ENCODE measurements at regions of chr1 and their contacts with region 1.

Region 1: DNA sequence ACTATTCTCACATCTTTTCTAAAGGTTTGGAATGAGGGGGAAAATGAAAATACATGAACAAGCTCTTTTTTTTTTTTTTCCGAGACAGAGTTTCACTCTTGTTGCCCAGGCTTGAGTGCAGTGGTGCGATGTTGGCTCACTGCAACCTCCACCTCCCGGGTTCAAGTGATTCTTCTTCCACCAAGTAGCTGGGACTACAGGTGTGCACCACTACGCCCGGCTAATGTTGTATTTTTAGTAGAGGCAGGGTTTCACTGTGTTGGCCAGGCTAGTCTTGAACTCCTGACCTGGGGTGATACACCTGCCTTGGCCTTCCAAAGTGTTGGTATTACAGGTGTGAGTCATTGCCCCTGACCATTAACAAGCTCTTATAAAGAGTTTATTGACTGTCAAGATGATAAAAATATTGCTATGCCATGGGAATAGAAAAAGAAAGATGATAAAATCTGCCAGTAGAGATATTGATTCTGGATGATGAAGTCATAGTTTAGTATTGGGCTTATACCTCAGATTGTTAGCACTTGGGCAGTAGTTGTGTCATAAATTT is 36.6 kb downstream of the INKA2 start:
- DNase-seq: no peak
- H3K4me3 ChIP-seq: no peak overlapping the region
- H3K27ac ChIP-seq: no peak overlapping the region
- H3K4me1 ChIP-seq: no peaks in the 10 kb centered on the region
- H3K27me3 ChIP-seq: no peaks in the 10 kb centered on the region
- CTCF ChIP-seq: no peak
- POLR2A ChIP-seq: no peak

Region 2: GRCh38 chr1:111644506-111644905 is 58.1 kb before region 1 on chr1:
- intact Hi-C with region 1: loop called (anchors 2 kb)
- DNase-seq: no peak
- H3K4me3 ChIP-seq: no peak overlapping the region
- H3K27ac ChIP-seq: no peak overlapping the region
- H3K4me1 ChIP-seq: peaks cover 0 to 3% of the 10 kb centered on the region in 2 donors
- H3K27me3 ChIP-seq: no peaks in the 10 kb centered on the region
- CTCF ChIP-seq: no peak
- POLR2A ChIP-seq: no peak

Region 3: GRCh38 chr1:111778541-111779051 is 76.0 kb after region 1 on chr1:
- intact Hi-C with region 1: no loop called
- DNase-seq: no peak
- H3K4me3 ChIP-seq: no peak overlapping the region
- H3K27ac ChIP-seq: no peak overlapping the region
- H3K4me1 ChIP-seq: no peaks in the 10 kb centered on the region
- H3K27me3 ChIP-seq: no peaks in the 10 kb centered on the region
- CTCF ChIP-seq: no peak
- POLR2A ChIP-seq: no peak

Region 4: DNA sequence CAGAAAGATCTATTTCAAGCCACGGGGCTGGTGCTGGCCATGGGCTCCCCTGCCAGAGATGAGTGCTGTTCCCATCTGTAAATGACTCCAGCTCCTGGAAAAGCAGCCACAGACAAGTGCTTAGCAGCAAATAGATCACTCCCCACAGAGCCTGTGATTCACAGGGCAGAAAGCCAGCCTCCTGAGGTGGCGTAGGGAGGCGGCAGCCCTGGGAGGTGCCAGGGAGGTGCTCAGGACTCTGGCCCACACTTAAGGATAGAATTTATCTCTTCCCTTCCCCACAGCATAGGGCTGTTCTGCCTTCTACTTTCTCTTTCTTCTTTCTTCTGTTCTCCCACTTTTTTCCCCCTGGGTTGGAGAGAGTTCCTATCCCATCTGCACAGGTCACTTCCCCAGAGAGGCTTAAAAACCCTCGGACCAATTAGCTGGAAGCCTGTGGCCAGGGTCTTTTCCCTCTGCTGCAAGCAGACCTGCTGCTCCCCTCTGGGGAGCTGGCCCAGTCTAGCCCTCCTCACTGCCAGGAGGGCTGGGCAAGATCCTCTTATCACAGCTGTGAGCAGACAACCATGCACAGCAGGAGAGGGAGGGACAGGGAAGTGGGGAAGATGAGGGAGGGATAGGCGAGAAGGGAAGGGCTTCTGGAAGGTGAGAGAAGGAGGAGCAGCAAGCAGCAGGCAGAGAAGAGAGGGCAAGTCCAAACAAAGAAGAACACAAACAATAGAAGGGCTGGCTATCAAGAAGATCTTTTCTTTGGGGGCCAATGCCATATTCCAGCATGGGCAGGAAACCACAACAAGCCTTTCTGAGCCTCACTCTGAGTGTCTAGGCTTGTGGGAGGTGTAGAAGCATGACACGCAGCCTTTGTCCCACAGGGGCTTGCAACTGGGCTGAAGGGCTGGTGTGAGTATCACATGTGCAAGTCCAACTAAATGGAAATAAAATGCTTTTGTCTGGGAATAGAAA is 245.9 kb after region 1 on chr1:
- intact Hi-C with region 1: no loop called
- DNase-seq: peak in 1 of 2 donors; percentile 53
- H3K4me3 ChIP-seq: peak overlapping the region in 2 of 3 donors; percentile 16 to 44
- H3K27ac ChIP-seq: peak overlapping the region; percentile 54 to 76
- H3K4me1 ChIP-seq: no peaks in the 10 kb centered on the region
- H3K27me3 ChIP-seq: no peaks in the 10 kb centered on the region
- CTCF ChIP-seq: no peak
- POLR2A ChIP-seq: no peak